Dorsolateral prefrontal cortex (tissue), 120 donors: ENCODE measurements at regions of chr15 and their contacts with region 1.

Region 1: DNA sequence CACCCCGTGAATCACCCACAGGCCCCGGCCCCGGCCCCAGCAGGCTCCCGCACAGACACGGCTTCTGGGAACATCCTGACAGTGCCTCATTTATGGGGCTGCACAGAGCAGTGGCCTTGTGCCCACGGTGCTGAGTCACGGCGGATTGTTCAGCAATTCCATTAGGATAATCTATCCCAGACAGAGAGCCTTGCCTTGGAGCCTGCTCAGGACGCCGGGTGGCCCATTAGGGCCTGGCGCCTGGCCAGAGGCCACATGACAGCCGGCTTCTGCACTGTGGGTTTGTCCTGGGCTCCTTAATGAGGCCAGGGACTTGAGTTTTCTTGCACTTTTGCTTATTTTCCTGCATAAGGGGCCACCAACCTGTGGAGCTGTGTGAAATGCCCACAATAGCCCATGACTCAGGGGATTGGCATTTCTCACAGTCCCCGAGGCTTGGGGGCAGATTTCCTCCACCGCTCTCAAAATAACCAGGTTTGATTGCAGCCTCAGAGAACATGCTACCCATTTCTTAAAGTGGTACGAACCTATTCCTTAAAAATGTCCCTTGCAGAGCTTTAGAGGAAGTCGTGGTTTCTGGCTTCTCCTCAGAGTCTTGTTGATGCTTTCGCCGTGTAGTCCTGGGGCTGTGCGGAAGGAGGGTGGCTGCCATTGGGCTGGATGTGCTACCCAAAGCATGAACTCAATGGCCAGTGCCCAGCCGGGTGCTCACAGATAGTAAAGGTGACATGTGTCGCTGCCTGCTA is 19.0 kb downstream of the SYNM start:
- DNase-seq: peak; percentile 42 to 96 (median 90)
- H3K4me3 ChIP-seq: peak overlapping the region in 56 of 59 donors; percentile 6 to 59 (median 41)
- H3K27ac ChIP-seq: peak overlapping the region; percentile 72 to 98 (median 92)
- H3K27me3 ChIP-seq: no peaks in the 10 kb centered on the region
- CTCF ChIP-seq: peak in 12 of 56 donors; percentile 4 to 53 (median 21)

Region 2: DNA sequence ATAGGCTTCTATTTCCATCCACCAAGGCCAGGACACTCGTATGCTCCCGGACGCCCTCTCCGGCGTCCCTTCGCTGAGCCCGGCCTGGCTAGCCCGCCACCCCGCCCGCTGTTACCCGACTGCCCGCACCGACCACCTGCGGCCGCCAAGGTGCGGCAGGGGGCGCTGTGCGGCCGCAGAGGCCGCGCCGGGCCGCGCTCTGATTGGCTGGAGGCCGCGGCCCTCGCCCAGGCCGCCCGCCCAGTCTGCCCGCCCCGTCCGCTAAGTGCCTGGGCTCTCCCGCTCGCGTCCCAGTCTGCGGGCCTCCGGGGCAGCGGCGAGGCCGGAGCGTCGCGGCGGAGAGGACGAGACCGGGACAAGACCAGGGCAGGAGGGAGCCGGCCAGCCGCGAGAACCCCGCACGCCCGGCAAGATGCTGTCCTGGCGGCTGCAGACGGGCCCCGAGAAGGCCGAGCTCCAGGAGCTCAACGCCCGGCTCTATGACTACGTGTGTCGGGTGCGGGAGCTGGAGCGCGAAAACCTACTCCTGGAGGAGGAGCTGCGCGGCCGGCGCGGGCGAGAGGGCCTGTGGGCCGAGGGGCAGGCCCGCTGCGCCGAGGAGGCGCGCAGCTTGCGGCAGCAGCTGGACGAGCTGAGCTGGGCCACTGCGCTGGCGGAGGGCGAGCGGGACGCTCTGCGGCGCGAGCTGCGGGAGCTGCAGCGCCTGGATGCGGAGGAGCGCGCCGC is 18.9 kb before region 1 on chr15 and contains the start of gene SYNM:
- intact Hi-C with region 1: loop called in 1 of 2 experiments (anchors 1 kb)
- DNase-seq: peak; percentile 20 to 90 (median 73)
- H3K4me3 ChIP-seq: peak within 1 kb of the TSS; percentile 53 to 83 (median 74)
- H3K27ac ChIP-seq: peak within 1 kb of the TSS in 57 of 59 donors; percentile 41 to 97 (median 86)
- H3K27me3 ChIP-seq: no peaks in the 10 kb centered on the region
- CTCF ChIP-seq: peak; percentile 50 to 98 (median 86)
- total RNA-seq, gene SYNM: 54.7 to 162 (median 78.7) TPM

Region 3: GRCh38 chr15:99197856-99198255 is 74.0 kb after region 1 on chr15:
- intact Hi-C with region 1: loop called in 1 of 2 experiments (anchors 5 kb)
- DNase-seq: no peak
- H3K4me3 ChIP-seq: no peak overlapping the region
- H3K27ac ChIP-seq: no peak overlapping the region
- H3K27me3 ChIP-seq: no peaks in the 10 kb centered on the region
- CTCF ChIP-seq: no peak